CD8-positive, alpha-beta T cell (primary cell): ENCODE measurements at regions of chr17 and their contacts with region 1.

Region 1: GRCh38 chr17:74790161-74791054 is 14.3 kb upstream of the NAT9 start:
- DNase-seq: peak in 1 of 9 experiments; percentile 27
- ATAC-seq: no peak
- H3K4me3 ChIP-seq: peak overlapping the region in 1 of 2 experiments; percentile 5
- H3K4me3 Mint-ChIP-seq: peak overlapping the region; percentile 57
- H3K27ac ChIP-seq: no peak overlapping the region
- H3K27ac Mint-ChIP-seq: peak overlapping the region; percentile 71
- H3K4me1 ChIP-seq: peaks cover 33% of the 10 kb centered on the region
- H3K4me1 Mint-ChIP-seq: peaks cover 40% of the 10 kb centered on the region
- H3K27me3 ChIP-seq: no peaks in the 10 kb centered on the region
- H3K27me3 Mint-ChIP-seq: no peaks in the 10 kb centered on the region
- CTCF ChIP-seq: no peak

Region 2: GRCh38 chr17:74759243-74759801 is 31.1 kb before region 1 on chr17:
- CTCF ChIA-PET with region 1: interaction called, 28 read pairs
- POLR2A ChIA-PET with region 1: interaction called, 3 read pairs
- intact Hi-C with region 1: no loop called
- DNase-seq: peak in 7 of 9 experiments; percentile 47 to 85 (median 71)
- ATAC-seq: peak; percentile 83
- H3K4me3 ChIP-seq: peak overlapping the region; percentile 37 to 41
- H3K4me3 Mint-ChIP-seq: peak overlapping the region; percentile 81
- H3K27ac ChIP-seq: peak overlapping the region; percentile 38 to 62
- H3K27ac Mint-ChIP-seq: peak overlapping the region; percentile 90
- H3K4me1 ChIP-seq: peaks cover 84% of the 10 kb centered on the region
- H3K4me1 Mint-ChIP-seq: peaks cover 75% of the 10 kb centered on the region
- H3K27me3 ChIP-seq: no peaks in the 10 kb centered on the region
- H3K27me3 Mint-ChIP-seq: no peaks in the 10 kb centered on the region
- CTCF ChIP-seq: no peak

Region 3: DNA sequence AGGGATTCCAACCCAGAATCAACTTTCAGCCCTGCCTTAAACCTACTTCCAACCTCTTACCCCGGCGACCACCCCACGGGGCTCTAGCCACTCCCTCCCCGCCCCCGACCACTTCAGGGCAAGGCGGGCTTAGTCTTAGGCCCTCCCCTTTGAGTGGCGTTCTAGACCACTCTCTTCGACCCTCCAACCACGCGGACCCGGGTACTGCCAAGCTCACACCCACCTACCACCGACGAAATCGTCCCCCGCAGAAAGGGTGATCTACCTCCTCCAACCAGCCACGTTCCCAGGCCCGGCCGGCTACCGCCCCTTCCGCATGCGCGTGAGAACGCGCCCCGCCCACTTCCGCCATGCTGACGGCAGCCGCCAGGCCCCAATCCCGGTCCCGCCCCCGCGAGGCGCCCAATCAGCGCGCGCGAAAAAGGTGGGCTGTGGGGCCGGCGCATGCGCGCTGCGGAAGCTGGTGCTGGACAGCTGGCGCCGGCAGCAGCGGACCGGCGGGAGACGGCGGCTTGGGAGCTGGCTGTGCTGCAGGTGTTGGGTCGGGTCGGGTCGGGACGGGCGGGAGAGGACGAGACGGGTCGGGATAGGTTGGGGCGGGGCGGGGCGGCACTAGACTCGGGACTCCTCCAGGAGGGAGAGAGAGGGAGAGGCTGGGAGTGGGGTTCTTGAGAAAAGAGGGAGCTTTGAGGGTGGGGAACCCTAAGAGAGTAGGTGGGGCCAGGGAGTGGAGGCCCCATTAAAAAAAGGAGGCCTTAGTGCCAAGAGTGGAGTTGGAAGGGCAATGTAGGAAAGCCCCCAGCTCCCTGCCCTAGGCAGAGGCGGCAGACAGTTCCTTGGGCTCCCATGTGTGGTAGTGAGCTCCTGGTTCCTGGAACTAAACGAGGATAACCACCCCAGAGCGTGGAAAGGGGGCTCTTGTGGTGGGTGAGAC is 14.1 kb before region 1 on chr17 and contains the start of gene NAT9:
- CTCF ChIA-PET with region 1: interaction called, 56 read pairs
- POLR2A ChIA-PET with region 1: interaction called, 8 read pairs
- intact Hi-C with region 1: loop called in 1 of 2 experiments (anchors 1 kb)
- DNase-seq: peak; percentile 97 to 100 (median 99)
- ATAC-seq: peak; percentile 74
- H3K4me3 ChIP-seq: peak within 1 kb of the TSS; percentile 68 to 83
- H3K4me3 Mint-ChIP-seq: peak within 1 kb of the TSS; percentile 99
- H3K27ac ChIP-seq: peak within 1 kb of the TSS; percentile 56 to 76
- H3K27ac Mint-ChIP-seq: peak within 1 kb of the TSS; percentile 97
- H3K4me1 ChIP-seq: peaks cover 47% of the 10 kb centered on the region
- H3K4me1 Mint-ChIP-seq: peaks cover 62% of the 10 kb centered on the region
- H3K27me3 ChIP-seq: no peaks in the 10 kb centered on the region
- H3K27me3 Mint-ChIP-seq: no peaks in the 10 kb centered on the region
- CTCF ChIP-seq: no peak
- total RNA-seq, gene NAT9: 37.9 to 41.1 TPM

Region 4: GRCh38 chr17:74807925-74808324 is 17.5 kb after region 1 on chr17:
- CTCF ChIA-PET with region 1: interaction called, 39 read pairs
- POLR2A ChIA-PET with region 1: no interaction called
- intact Hi-C with region 1: no loop called
- DNase-seq: no peak
- ATAC-seq: no peak
- H3K4me3 ChIP-seq: no peak overlapping the region
- H3K4me3 Mint-ChIP-seq: no peak overlapping the region
- H3K27ac ChIP-seq: no peak overlapping the region
- H3K27ac Mint-ChIP-seq: no peak overlapping the region
- H3K4me1 ChIP-seq: no peaks in the 10 kb centered on the region
- H3K4me1 Mint-ChIP-seq: no peaks in the 10 kb centered on the region
- H3K27me3 ChIP-seq: no peaks in the 10 kb centered on the region
- H3K27me3 Mint-ChIP-seq: no peaks in the 10 kb centered on the region
- CTCF ChIP-seq: no peak

Region 5: DNA sequence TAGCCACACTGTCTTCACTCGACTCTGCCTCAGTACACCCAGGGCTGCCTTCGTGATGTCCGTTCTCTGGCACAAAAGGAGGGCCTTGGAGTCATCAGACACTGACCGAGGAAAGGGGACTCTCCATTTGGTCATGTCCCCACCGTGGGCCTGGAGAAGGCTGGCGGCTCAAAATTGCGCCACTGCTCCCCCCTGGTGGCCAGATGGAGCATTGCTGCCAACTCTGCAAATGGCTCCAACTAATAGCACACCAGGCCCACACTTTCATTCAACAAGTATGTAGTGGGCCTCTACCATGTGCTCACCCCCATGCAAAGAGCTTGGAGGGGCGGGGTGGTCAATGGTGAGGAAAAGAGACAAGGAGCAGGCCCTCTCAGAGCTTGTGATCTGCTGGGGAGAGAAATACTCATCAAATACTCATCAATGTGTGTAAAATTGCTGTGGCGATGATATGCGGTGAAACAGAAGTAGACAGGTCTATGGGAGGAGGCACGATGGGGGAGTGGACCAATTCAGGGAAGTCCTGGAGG is 74.5 kb after region 1 on chr17:
- CTCF ChIA-PET with region 1: interaction called, 318 read pairs
- POLR2A ChIA-PET with region 1: no interaction called
- intact Hi-C with region 1: loop called (anchors 1 kb)
- DNase-seq: peak; percentile 46 to 84 (median 73)
- ATAC-seq: peak; percentile 75
- H3K4me3 ChIP-seq: no peak overlapping the region
- H3K4me3 Mint-ChIP-seq: no peak overlapping the region
- H3K27ac ChIP-seq: no peak overlapping the region
- H3K27ac Mint-ChIP-seq: no peak overlapping the region
- H3K4me1 ChIP-seq: peaks cover 21% of the 10 kb centered on the region
- H3K4me1 Mint-ChIP-seq: peaks cover 13% of the 10 kb centered on the region
- H3K27me3 ChIP-seq: peaks cover 8 to 21% of the 10 kb centered on the region in 2 experiments
- H3K27me3 Mint-ChIP-seq: peaks cover 13% of the 10 kb centered on the region
- CTCF ChIP-seq: peak; percentile 92